CD4-positive, alpha-beta memory T cell (primary cell): ENCODE measurements at regions of chr18 and their contacts with region 1.

Region 1: DNA sequence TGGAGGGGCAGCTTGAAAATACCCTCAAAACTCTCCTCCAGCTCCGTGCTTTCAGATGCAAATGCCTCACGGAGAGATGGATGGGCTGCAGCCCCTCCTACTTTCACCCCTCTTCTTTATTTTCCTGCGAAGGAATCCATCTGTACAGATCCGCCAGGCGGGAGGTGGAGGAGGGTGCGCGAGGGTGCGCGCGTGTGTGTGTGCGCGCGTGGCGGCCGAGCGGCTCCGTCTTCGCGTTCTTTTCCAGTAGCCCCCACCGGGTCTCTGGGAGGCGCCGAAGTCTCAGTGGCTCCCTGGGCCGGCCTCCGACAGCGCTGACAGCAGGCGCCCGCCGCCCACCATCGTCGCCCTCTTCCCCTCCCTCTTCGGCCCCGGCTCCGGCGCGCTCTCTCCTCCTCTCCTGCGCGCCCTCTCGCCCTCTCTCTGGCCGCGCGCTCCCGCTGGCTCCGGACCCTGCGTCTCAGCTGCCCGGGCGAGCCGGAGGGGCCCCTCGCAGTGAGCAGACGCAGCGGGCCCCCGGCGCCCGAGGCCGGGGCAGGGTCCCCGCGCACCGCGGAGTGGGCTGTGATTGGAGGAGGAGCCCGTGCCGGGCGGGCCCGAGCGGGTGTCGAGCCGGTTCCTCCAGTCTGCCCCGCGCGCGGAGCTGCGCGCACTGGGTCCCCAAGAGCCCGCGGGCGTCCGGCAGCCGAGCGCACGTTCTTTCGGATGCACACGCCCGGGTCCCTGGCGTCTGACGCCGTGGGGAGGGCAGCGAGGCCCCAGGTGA is at the start of gene CDH7:
- DNase-seq: no peak
- H3K4me3 ChIP-seq: no peak within 1 kb of the TSS
- H3K4me3 Mint-ChIP-seq: peak within 1 kb of the TSS in 1 of 8 donors; percentile 40
- H3K27ac ChIP-seq: no peak within 1 kb of the TSS
- H3K27ac Mint-ChIP-seq: no peak within 1 kb of the TSS
- H3K4me1 ChIP-seq: no peaks in the 10 kb centered on the region
- H3K4me1 Mint-ChIP-seq: no peaks in the 10 kb centered on the region
- H3K27me3 ChIP-seq: no peaks in the 10 kb centered on the region
- H3K27me3 Mint-ChIP-seq: peaks cover 1 to 4% of the 10 kb centered on the region in 2 donors
- total RNA-seq, gene CDH7: not detected

Region 2: GRCh38 chr18:65298422-65298821 is 452.1 kb before region 1 on chr18:
- CTCF ChIA-PET with region 1: no interaction called
- POLR2A ChIA-PET with region 1: no interaction called
- intact Hi-C with region 1: no loop called
- DNase-seq: no peak
- H3K4me3 ChIP-seq: no peak overlapping the region
- H3K4me3 Mint-ChIP-seq: no peak overlapping the region
- H3K27ac ChIP-seq: no peak overlapping the region
- H3K27ac Mint-ChIP-seq: no peak overlapping the region
- H3K4me1 ChIP-seq: no peaks in the 10 kb centered on the region
- H3K4me1 Mint-ChIP-seq: no peaks in the 10 kb centered on the region
- H3K27me3 ChIP-seq: no peaks in the 10 kb centered on the region
- H3K27me3 Mint-ChIP-seq: no peaks in the 10 kb centered on the region

Region 3: GRCh38 chr18:65711493-65711892 is 39.1 kb before region 1 on chr18:
- CTCF ChIA-PET with region 1: no interaction called
- POLR2A ChIA-PET with region 1: no interaction called
- intact Hi-C with region 1: no loop called
- DNase-seq: no peak
- H3K4me3 ChIP-seq: no peak overlapping the region
- H3K4me3 Mint-ChIP-seq: no peak overlapping the region
- H3K27ac ChIP-seq: no peak overlapping the region
- H3K27ac Mint-ChIP-seq: no peak overlapping the region
- H3K4me1 ChIP-seq: no peaks in the 10 kb centered on the region
- H3K4me1 Mint-ChIP-seq: no peaks in the 10 kb centered on the region
- H3K27me3 ChIP-seq: no peaks in the 10 kb centered on the region
- H3K27me3 Mint-ChIP-seq: no peaks in the 10 kb centered on the region

Region 4: DNA sequence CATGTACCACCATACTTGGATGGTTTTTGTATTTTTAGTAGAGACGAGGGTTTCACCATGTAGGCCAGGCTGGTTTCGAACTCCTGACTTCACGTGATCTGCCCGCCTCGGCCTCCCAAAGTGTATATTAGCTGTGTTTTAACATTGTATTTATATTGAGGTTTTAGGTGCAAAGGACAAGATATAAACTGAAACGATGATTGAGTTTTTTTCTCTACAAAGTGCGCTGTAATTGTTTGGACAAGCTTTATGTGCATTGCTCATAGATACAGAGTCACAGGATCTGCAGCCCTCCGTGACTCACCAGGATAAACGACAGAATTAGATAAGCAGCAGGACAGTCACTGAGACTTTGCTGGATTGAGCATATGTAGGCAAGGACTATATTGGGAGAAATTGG is 17.8 kb after region 1 on chr18:
- CTCF ChIA-PET with region 1: no interaction called
- POLR2A ChIA-PET with region 1: no interaction called
- intact Hi-C with region 1: loop called (anchors 1 kb)
- DNase-seq: no peak
- H3K4me3 ChIP-seq: no peak overlapping the region
- H3K4me3 Mint-ChIP-seq: no peak overlapping the region
- H3K27ac ChIP-seq: no peak overlapping the region
- H3K27ac Mint-ChIP-seq: no peak overlapping the region
- H3K4me1 ChIP-seq: no peaks in the 10 kb centered on the region
- H3K4me1 Mint-ChIP-seq: no peaks in the 10 kb centered on the region
- H3K27me3 ChIP-seq: no peaks in the 10 kb centered on the region
- H3K27me3 Mint-ChIP-seq: no peaks in the 10 kb centered on the region

Region 5: GRCh38 chr18:66325251-66325650 is 574.7 kb after region 1 on chr18:
- CTCF ChIA-PET with region 1: no interaction called
- POLR2A ChIA-PET with region 1: no interaction called
- intact Hi-C with region 1: no loop called
- DNase-seq: no peak
- H3K4me3 ChIP-seq: no peak overlapping the region
- H3K4me3 Mint-ChIP-seq: no peak overlapping the region
- H3K27ac ChIP-seq: no peak overlapping the region
- H3K27ac Mint-ChIP-seq: no peak overlapping the region
- H3K4me1 ChIP-seq: no peaks in the 10 kb centered on the region
- H3K4me1 Mint-ChIP-seq: no peaks in the 10 kb centered on the region
- H3K27me3 ChIP-seq: no peaks in the 10 kb centered on the region
- H3K27me3 Mint-ChIP-seq: no peaks in the 10 kb centered on the region